ENCODE measurements at regions of chr14 and their contacts with region 1.

Region 1: DNA sequence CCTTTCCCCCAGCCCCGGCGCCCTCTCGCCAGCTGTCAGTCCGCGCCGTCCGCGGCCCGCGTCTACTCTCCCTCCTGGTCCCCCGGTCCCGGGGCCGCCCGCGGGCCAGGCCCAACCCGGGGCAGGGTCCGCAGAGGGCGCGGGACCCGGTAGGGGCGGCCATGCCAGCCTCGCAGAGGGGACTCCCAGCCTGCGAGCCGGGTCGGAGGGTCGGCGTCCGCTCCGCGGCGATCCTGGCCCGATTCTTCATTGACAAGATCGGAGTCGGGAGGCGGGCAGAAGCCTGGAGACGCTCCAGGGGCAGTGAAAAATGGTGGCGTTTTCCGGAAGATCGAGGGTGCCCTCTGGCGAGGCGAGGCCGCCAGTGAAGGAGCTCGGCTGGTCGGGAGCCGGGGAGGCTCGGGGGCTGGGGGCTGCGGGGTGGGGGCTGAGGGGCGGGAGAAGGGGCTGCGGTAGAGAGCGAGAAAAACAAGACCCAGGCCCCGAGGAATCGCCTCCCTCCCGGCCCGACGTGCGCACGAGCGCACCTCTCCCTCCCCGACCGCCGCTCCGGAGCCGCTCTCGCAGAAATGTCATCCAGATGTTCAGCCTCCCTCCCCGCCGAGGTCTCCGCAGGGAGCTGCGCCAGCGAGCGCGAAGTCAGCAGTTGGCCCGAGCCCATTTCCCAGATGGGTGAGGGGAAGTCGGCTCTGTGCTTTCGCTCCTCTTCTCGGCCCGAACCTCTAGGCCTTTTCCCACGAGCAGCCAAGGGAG is 647 bp upstream of the TGFB3 start:
- DNase-seq: peak; percentile 84
- H3K4me3 Mint-ChIP-seq: peak overlapping the region; percentile 70
- H3K27ac Mint-ChIP-seq: peak overlapping the region; percentile 74
- H3K4me1 Mint-ChIP-seq: peaks cover 47% of the 10 kb centered on the region
- H3K27me3 Mint-ChIP-seq: peaks cover 20% of the 10 kb centered on the region

Region 2: GRCh38 chr14:75709207-75709812 is 273.1 kb before region 1 on chr14:
- CTCF ChIA-PET with region 1: interaction called, 131 read pairs
- DNase-seq: peak; percentile 78
- H3K4me3 Mint-ChIP-seq: no peak overlapping the region
- H3K27ac Mint-ChIP-seq: no peak overlapping the region
- H3K4me1 Mint-ChIP-seq: no peaks in the 10 kb centered on the region
- H3K27me3 Mint-ChIP-seq: no peaks in the 10 kb centered on the region

Region 3: GRCh38 chr14:75875958-75876357 is 106.5 kb before region 1 on chr14:
- CTCF ChIA-PET with region 1: no interaction called
- DNase-seq: no peak
- H3K4me3 Mint-ChIP-seq: no peak overlapping the region
- H3K27ac Mint-ChIP-seq: no peak overlapping the region
- H3K4me1 Mint-ChIP-seq: peaks cover 7% of the 10 kb centered on the region
- H3K27me3 Mint-ChIP-seq: no peaks in the 10 kb centered on the region

Region 4: DNA sequence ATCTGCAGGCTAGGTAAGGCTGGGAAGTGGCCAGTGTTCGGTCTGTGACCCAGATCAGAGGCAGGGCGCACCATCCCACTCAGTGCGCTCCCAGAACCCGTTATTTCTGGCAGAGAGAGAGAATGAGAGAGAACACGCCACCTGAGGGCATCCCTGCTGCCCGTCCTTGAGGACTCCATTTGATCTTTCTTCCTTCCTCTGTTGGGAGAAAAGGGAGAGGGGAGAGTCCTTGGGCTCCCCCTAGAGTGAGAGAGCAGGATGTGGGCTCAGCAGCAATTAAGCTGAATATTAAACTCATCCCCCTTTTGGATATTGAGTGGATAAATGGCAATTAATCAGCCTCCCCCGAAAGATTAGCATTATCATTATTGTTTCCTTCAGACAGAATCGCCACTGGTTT is 73.7 kb after region 1 on chr14:
- CTCF ChIA-PET with region 1: no interaction called
- DNase-seq: no peak
- H3K4me3 Mint-ChIP-seq: no peak overlapping the region
- H3K27ac Mint-ChIP-seq: no peak overlapping the region
- H3K4me1 Mint-ChIP-seq: no peaks in the 10 kb centered on the region
- H3K27me3 Mint-ChIP-seq: no peaks in the 10 kb centered on the region